ENCODE measurements at regions of chr1 and their contacts with region 1.

Region 1: GRCh38 chr1:24391882-24392603 is 21.5 kb downstream of the STPG1 start:
- H3K4me3 Mint-ChIP-seq: no peak overlapping the region
- H3K27ac Mint-ChIP-seq: no peak overlapping the region
- H3K4me1 Mint-ChIP-seq: peaks cover 8% of the 10 kb centered on the region
- H3K27me3 Mint-ChIP-seq: no peaks in the 10 kb centered on the region

Region 2: GRCh38 chr1:24070821-24071393 is 321.1 kb before region 1 on chr1:
- intact Hi-C with region 1: loop called (anchors 5 kb)
- H3K4me3 Mint-ChIP-seq: no peak overlapping the region
- H3K27ac Mint-ChIP-seq: no peak overlapping the region
- H3K4me1 Mint-ChIP-seq: peaks cover 18% of the 10 kb centered on the region
- H3K27me3 Mint-ChIP-seq: peaks cover 5% of the 10 kb centered on the region

Region 3: GRCh38 chr1:24150234-24151174 is 241.5 kb before region 1 on chr1:
- intact Hi-C with region 1: loop called (anchors 1 kb)
- H3K4me3 Mint-ChIP-seq: no peak overlapping the region
- H3K27ac Mint-ChIP-seq: no peak overlapping the region
- H3K4me1 Mint-ChIP-seq: peaks cover 11% of the 10 kb centered on the region
- H3K27me3 Mint-ChIP-seq: peaks cover 50% of the 10 kb centered on the region

Region 4: GRCh38 chr1:24201941-24202440 is 190.1 kb before region 1 on chr1:
- intact Hi-C with region 1: loop called (anchors 1 kb)
- H3K4me3 Mint-ChIP-seq: no peak overlapping the region
- H3K27ac Mint-ChIP-seq: no peak overlapping the region
- H3K4me1 Mint-ChIP-seq: peaks cover 13% of the 10 kb centered on the region
- H3K27me3 Mint-ChIP-seq: peaks cover 21% of the 10 kb centered on the region

Region 5: DNA sequence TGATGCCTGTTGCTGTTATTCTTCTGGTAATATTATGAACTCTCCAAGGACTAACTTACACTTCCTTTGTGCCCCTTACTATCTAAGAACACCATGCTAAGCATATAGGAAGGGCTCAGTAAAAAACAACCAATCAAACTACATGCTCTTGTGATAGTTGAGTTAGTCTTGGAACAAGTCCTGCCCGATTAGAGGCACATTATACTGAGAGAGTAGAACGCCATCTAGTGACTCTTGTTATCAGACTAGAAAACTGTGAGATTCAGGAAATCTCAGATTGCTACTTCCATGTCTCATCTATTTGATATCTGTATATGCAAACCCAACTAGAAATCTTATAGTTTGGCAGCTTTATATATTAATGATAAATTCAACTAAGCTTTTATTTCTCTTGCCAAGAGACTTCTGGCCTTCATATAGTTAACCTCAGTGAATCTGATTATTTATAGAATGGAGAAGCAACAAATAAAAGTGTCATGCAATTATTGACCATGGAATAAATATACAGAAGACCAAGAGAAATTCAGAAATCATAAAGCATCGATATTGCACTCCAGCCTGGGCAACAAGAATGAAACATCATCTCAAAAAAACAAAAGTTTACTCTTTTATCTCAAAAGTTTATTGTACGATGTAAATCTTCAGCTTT is 243.3 kb after region 1 on chr1:
- intact Hi-C with region 1: loop called (anchors 10 kb)
- H3K4me3 Mint-ChIP-seq: no peak overlapping the region
- H3K27ac Mint-ChIP-seq: no peak overlapping the region
- H3K4me1 Mint-ChIP-seq: peaks cover 23% of the 10 kb centered on the region
- H3K27me3 Mint-ChIP-seq: peaks cover 2% of the 10 kb centered on the region

Region 6: DNA sequence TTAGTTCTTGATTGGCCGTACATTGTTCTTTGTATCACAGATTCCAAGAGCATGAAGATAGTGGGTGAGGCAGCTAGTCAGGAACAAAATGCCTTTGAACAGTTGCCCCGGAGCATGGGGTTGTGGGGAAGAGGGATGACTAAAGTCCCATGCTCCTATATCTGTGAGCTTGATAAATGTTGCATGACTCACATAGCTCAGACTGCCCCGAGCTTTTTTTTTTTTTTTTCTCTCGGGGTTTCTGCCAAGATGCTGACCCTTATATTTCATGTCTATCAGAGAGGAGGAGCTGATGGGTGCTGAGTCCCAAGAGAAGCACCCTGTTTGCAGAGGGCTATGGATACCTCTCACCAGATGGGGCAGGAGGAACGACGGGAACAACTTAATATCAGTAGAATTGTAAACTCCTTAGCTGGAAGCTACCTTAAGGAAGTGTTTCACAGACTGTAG is 291.7 kb after region 1 on chr1:
- intact Hi-C with region 1: no loop called
- H3K4me3 Mint-ChIP-seq: no peak overlapping the region
- H3K27ac Mint-ChIP-seq: no peak overlapping the region
- H3K4me1 Mint-ChIP-seq: peaks cover 8% of the 10 kb centered on the region
- H3K27me3 Mint-ChIP-seq: no peaks in the 10 kb centered on the region

Measured in dendritic cell treated with granulocyte-macrophage colony-stimulating factor and Interleukin-4, amounts not matched to agents 40 ng/mL and 50 ng/mL, for 4 days (primary cell).